Psoas muscle (tissue), 8 donors: ENCODE measurements at regions of chr1 and their contacts with region 1.

Region 1: DNA sequence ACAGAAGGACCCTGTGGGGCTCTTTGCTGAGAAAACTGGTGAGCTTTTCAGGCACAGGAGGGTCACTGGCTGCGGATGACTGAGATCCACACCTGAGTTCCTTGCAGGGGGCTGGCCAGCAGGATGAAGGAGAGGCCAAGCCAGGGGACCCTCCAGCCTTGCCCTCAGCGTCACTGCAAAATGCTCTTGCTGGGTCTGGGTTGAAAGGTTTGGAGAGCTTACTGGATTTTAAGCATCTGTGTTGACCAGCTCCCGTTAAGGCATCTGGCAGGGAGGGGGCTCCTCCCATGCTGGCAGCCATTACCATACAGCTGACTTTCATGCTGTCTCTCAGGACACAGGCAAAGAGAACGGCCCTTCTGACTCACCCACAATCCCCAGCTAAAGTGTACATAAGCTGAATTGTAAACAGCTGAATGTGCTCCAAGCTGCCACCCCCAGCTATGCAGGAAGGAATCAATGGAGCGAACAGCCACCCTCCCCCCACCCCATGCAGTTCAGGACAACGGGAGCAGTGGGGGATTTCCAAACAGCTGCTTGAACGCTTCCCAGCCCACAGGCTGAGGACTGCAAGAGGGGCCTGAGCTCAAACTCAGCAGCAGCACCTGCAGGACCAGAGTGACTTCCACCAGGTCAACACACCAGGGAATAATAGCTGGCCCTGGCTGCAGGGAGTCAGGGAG is 21.3 kb upstream of the A3GALT2 start:
- DNase-seq: peak; percentile 80 to 91
- ATAC-seq: peak; percentile 50 to 66 (median 58)
- H3K4me3 ChIP-seq: peak overlapping the region; percentile 55
- H3K27ac ChIP-seq: peak overlapping the region; percentile 98
- H3K4me1 ChIP-seq: peaks cover 98% of the 10 kb centered on the region
- H3K27me3 ChIP-seq: no peaks in the 10 kb centered on the region
- CTCF ChIP-seq: no peak

Region 2: DNA sequence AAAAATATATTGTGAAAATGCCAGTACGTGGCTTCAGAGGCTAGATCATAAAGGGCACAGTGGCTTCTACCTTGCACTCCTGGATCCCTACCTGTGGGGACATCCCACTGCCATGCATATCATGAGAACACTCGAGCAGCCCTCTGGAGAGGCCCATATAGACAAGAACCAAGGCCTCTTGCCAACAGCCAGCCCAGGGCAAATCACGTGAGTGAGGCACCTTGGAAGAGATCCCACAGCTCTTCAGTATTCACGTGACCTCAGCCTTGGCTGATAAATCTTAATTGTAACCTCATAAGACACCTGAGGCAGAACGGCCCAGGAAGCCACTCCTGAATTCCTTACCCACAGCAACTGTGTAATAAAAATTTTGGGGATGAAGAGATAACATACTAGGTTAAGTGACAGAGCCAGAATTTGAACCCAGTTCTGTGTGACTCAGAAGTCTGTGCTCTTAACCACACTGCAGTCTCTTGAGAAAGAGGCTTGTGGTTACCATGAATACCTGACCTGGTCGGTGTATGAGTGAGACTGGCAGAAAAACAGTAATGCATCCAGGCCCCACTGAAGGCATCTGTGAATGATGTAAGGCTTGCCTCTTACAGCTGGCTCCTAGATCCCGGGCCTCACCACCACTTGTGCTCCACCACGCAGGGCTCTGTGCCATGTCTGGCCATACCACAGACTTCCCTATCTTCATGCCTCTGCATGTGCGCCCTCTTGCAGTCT is 14.4 kb before region 1 on chr1:
- intact Hi-C with region 1: loop called in 1 of 2 experiments (anchors 1 kb)
- DNase-seq: peak; percentile 84 to 88
- ATAC-seq: peak; percentile 70 to 83 (median 78)
- H3K4me3 ChIP-seq: no peak overlapping the region
- H3K27ac ChIP-seq: peak overlapping the region; percentile 98
- H3K4me1 ChIP-seq: peaks cover 51% of the 10 kb centered on the region
- H3K27me3 ChIP-seq: no peaks in the 10 kb centered on the region
- CTCF ChIP-seq: no peak